PC-3 (cell line): ENCODE measurements at regions of chr6 and their contacts with region 1.

Region 1: GRCh38 chr6:2634139-2634964 is 116.4 kb downstream of the MYLK4 start:
- DNase-seq: peak; percentile 90
- ATAC-seq: peak; percentile 76
- H3K4me3 ChIP-seq: peak overlapping the region; percentile 57
- H3K27ac ChIP-seq: peak overlapping the region; percentile 56
- H3K4me1 ChIP-seq: peaks cover 48% of the 10 kb centered on the region
- H3K27me3 ChIP-seq: no peaks in the 10 kb centered on the region
- CTCF ChIP-seq: peak; percentile 94

Region 2: DNA sequence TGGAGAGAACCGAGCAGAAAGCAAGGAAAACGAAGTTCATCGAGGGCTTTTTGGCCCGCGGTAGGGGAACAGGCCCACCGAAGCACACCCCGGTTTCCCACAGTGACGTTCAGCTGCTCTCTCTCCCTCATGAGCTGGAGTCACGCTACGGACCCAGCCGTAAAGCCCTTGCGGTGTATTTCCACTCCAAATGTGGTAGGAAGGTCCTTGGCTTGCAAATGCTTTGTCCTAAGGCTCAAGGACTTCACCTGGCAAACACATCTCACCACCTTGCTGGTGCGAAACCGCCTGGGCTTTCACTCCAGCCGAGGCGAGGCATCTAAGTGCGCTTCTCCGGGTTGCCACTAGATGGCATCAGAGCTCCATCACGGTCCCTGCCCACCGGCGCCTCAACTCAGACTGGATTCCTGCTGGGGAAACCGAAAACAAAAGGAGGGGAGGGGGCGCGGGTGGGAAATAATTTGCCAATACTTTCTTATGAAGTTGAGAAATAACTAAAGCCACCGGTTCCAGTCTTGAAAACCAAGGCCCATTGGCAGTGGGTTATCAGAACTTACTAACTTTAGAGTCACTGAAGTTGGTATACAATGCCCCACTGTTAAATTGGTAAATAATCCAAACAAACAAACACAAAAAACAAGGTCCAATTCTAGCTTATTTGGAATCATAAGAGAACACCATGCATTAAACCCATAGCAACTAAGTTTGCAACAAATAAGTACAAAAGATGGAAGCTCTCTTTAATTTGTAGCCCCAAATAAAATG is 1038.1 kb before region 1 on chr6:
- CTCF ChIA-PET with region 1: no interaction called
- POLR2A ChIA-PET with region 1: no interaction called
- intact Hi-C with region 1: loop called (anchors 1 kb)
- DNase-seq: peak; percentile 66
- ATAC-seq: peak; percentile 53
- H3K4me3 ChIP-seq: peak overlapping the region; percentile 34; the same call in 1 of the 2 replicates
- H3K27ac ChIP-seq: no peak overlapping the region
- H3K4me1 ChIP-seq: peaks cover 39% of the 10 kb centered on the region
- H3K27me3 ChIP-seq: peaks cover 20% of the 10 kb centered on the region
- CTCF ChIP-seq: peak; percentile 93

Region 3: GRCh38 chr6:2196079-2196679 is 438.2 kb before region 1 on chr6:
- CTCF ChIA-PET with region 1: no interaction called
- POLR2A ChIA-PET with region 1: no interaction called
- intact Hi-C with region 1: loop called (anchors 5 kb)
- DNase-seq: peak; percentile 76
- ATAC-seq: peak; percentile 43
- H3K4me3 ChIP-seq: no peak overlapping the region
- H3K27ac ChIP-seq: no peak overlapping the region; the same call in 1 of the 2 replicates
- H3K4me1 ChIP-seq: peaks cover 21% of the 10 kb centered on the region
- H3K27me3 ChIP-seq: no peaks in the 10 kb centered on the region
- CTCF ChIP-seq: peak; percentile 89

Region 4: GRCh38 chr6:2448820-2449571 is 185.4 kb before region 1 on chr6:
- CTCF ChIA-PET with region 1: no interaction called
- POLR2A ChIA-PET with region 1: no interaction called
- intact Hi-C with region 1: loop called (anchors 1 kb)
- DNase-seq: peak; percentile 85
- ATAC-seq: peak; percentile 68
- H3K4me3 ChIP-seq: peak overlapping the region; percentile 26; the same call in 1 of the 2 replicates
- H3K27ac ChIP-seq: no peak overlapping the region
- H3K4me1 ChIP-seq: peaks cover 20% of the 10 kb centered on the region
- H3K27me3 ChIP-seq: no peaks in the 10 kb centered on the region
- CTCF ChIP-seq: peak; percentile 89

Region 5: DNA sequence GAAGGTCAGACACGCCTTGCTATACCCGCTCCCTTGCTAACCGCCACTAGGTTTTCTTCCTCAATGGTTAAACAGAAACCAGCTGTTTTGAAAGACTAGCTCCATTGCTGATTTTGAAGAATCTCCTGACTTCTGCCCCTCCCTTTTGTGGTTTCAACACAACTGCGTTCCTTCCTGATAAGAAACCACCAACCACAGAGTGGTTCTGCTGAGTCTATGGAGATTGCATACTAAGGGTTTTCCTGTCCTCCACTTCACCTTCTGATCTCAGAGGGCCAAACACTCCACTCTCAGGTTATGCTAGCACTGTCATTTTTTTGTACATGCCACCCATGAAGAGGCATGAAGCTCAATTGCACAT is 91.5 kb before region 1 on chr6:
- CTCF ChIA-PET with region 1: no interaction called
- POLR2A ChIA-PET with region 1: no interaction called
- intact Hi-C with region 1: no loop called
- DNase-seq: peak; percentile 54
- ATAC-seq: no peak; the same call in 1 of the 2 replicates
- H3K4me3 ChIP-seq: no peak overlapping the region
- H3K27ac ChIP-seq: no peak overlapping the region
- H3K4me1 ChIP-seq: peaks cover 14% of the 10 kb centered on the region
- H3K27me3 ChIP-seq: no peaks in the 10 kb centered on the region
- CTCF ChIP-seq: no peak

Region 6: GRCh38 chr6:2611090-2611489 is 23.3 kb before region 1 on chr6:
- CTCF ChIA-PET with region 1: no interaction called
- POLR2A ChIA-PET with region 1: no interaction called
- intact Hi-C with region 1: loop called (anchors 1 kb)
- DNase-seq: peak; percentile 61
- ATAC-seq: peak; percentile 99
- H3K4me3 ChIP-seq: no peak overlapping the region
- H3K27ac ChIP-seq: no peak overlapping the region
- H3K4me1 ChIP-seq: peaks cover 4% of the 10 kb centered on the region; the same call in 1 of the 2 replicates
- H3K27me3 ChIP-seq: no peaks in the 10 kb centered on the region
- CTCF ChIP-seq: peak; percentile 33; the same call in 1 of the 2 replicates

Region 7: GRCh38 chr6:2765166-2765895 is 131.0 kb after region 1 on chr6 and contains the start of gene WRNIP1:
- CTCF ChIA-PET with region 1: interaction called, 10 read pairs
- POLR2A ChIA-PET with region 1: no interaction called
- intact Hi-C with region 1: no loop called
- DNase-seq: peak; percentile 99
- ATAC-seq: peak; percentile 86
- H3K4me3 ChIP-seq: peak within 1 kb of the TSS; percentile 97
- H3K27ac ChIP-seq: peak within 1 kb of the TSS; percentile 61
- H3K4me1 ChIP-seq: peaks cover 39% of the 10 kb centered on the region
- H3K27me3 ChIP-seq: no peaks in the 10 kb centered on the region
- CTCF ChIP-seq: peak; percentile 59
- total RNA-seq, gene WRNIP1: 92.2 and 114 TPM in 2 replicates